Heart left ventricle (tissue), 16 donors: ENCODE measurements at regions of chr16 and their contacts with region 1.

Region 1: DNA sequence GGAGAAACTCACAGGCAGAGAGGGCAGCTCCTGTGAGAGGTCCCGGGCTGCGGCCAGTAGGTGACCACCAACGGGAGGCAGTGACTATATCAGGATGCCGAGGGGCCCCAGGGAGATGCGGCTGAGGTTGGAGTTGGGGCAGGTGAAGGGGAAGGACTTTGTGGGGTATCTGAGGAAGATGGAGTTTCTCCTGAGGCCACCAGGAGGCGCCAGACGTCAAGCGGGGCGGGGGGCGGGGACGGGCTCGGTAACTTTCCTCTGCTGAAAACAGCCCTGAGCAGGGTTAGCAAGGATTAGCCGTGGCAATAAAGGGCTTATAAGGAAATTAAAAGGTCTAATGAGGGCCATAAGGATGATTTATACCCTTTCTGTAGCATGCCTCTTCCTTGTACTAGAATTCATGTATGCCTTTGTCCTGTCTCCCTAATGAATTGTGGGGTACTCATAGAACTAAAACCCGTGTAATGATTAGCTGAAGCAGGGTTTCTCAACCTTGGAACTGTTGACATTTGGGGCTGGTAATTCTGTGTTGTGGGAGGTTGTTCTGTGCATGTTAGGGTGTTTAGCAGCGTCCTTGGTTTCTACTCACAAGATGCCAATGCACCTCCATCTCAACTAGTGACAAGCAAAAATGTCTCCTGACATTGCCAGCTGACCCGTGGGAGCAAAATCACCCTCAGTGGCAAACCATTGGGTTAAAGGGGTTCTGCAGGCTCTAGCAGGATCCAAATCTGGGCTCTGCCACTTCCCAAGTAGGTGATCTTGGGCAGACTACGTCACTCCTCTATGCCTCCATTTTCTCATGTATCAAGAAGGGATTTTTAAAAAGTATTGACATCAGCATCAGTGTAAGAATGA is 74.8 kb upstream of the GRIN2A start:
- DNase-seq: peak in 2 of 5 donors; percentile 25 to 27
- ATAC-seq: peak in 2 of 4 donors; percentile 58 to 76
- H3K4me3 ChIP-seq: no peak overlapping the region
- H3K27ac ChIP-seq: no peak overlapping the region
- H3K4me1 ChIP-seq: peaks cover 0 to 11% (median 0%) of the 10 kb centered on the region in 12 donors
- H3K27me3 ChIP-seq: peaks cover 0 to 15% (median 0%) of the 10 kb centered on the region in 9 donors
- CTCF ChIP-seq: peak; percentile 59 to 84 (median 73)
- POLR2A ChIP-seq: no peak

Region 2: GRCh38 chr16:8828541-8829165 is 1428.4 kb before region 1 on chr16:
- intact Hi-C with region 1: no loop called
- DNase-seq: no peak
- ATAC-seq: no peak
- H3K4me3 ChIP-seq: no peak overlapping the region
- H3K27ac ChIP-seq: no peak overlapping the region
- H3K4me1 ChIP-seq: no peaks in the 10 kb centered on the region
- H3K27me3 ChIP-seq: no peaks in the 10 kb centered on the region
- CTCF ChIP-seq: no peak
- POLR2A ChIP-seq: no peak

Region 3: DNA sequence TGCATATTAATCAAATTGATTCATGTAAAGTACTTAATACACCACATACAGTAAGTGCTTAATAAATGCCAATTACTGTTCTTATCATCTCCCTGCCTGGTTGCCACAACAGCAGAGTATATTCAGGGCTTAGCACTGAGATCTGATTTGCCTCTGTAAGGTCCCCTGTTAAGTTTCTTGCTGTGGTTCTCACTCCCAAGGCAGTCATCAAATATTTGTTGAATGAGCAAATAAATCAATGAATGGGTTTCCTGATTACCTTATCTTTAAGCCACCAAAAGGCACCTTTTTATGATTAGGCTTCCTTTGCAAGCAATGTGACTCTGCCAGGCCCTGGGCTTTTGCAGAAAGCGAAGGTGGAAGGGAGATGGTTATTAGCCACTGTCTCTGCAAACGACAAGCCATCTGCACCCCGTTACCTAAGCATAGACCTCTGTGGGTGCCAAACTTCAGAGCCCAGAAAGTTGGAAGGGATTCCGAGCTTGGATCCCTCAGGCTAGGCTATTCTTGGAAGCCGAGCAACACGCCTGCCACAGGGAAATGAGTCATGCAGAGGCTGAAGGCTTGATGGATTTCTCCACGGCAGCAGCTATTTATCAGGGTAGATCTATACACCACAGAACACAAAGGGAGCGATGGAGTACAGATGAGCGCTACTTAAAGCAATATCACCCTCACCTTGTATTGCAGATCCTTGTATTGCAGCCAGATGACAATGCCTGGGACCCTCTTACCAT is 176.8 kb before region 1 on chr16:
- intact Hi-C with region 1: no loop called
- DNase-seq: peak; percentile 31 to 69 (median 66)
- ATAC-seq: peak; percentile 81 to 95 (median 94)
- H3K4me3 ChIP-seq: no peak overlapping the region
- H3K27ac ChIP-seq: peak overlapping the region in 4 of 12 donors; percentile 29 to 50 (median 36)
- H3K4me1 ChIP-seq: peaks cover 0 to 24% (median 15%) of the 10 kb centered on the region in 12 donors
- H3K27me3 ChIP-seq: peaks cover 0 to 4% (median 0%) of the 10 kb centered on the region in 9 donors
- CTCF ChIP-seq: no peak
- POLR2A ChIP-seq: no peak

Region 4: DNA sequence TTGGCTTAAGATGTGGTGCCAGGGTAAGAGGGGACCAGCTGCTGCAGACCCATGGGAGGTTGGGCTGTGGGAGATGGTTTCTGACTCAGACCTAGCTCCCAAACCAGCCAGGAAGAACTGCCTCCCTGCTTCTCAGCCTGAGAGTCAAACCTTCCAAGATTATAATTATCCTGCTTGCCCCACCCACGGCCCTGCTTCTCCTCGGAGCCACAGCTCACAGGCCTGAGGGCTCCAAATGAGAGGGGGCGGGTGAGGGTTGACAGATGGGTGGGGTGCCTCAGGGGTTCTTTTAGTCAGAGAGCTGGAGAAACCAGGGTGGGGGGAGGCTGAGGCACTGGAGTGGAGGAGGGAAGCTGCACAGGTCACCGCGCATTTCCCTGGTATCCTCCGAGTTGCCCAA is 46.1 kb before region 1 on chr16:
- intact Hi-C with region 1: loop called in 1 of 10 experiments (anchors 5 kb)
- DNase-seq: no peak
- ATAC-seq: no peak
- H3K4me3 ChIP-seq: no peak overlapping the region
- H3K27ac ChIP-seq: no peak overlapping the region
- H3K4me1 ChIP-seq: no peaks in the 10 kb centered on the region
- H3K27me3 ChIP-seq: peaks cover 0 to 5% (median 0%) of the 10 kb centered on the region in 9 donors
- CTCF ChIP-seq: no peak
- POLR2A ChIP-seq: no peak

Region 5: DNA sequence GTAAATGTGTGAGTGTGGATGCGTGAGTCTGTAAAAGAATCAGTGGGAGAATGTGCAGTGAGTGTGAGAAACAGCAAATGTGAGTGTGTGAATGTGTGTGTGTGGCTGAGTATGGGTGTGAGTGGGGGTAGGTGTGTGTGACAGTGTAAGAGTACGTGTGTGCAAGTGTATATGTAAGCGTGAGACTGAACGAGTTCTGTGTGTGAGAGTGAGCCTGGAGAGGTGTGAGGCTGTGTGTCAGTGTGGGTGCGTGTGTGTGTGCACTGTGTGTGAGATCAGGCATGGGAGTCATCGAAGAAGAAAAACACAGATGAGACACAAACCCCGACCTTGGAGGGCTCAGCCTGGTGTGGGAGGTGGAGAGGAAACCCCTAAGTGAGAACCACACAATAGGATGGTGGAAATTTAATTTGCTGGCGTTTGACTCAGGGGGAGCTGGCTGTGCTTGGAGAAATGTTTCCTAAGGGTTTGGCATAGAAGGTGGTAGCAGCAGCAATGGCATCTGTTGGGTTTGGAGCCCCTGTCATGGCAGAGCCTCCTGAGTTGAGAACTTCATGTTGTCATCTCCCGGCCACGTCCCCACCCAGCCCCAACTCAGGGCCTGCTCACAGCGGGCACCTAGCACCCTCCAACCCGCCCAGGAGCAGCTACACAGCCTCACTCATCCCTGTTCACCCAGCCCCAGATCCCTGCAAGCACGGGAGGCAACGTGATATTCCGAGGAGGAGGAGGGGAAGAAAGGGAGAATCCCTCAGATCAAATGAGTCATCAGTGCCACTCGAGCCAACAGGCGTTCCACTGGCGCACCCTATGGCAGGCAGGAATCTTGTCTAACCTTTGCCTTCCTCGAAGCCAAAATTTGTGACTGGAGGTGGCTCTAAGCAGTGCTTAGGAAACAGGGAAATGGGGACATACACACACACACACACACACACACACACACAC is 472.4 kb after region 1 on chr16:
- intact Hi-C with region 1: loop called in 5 of 10 experiments (anchors 5 to 10 kb)
- DNase-seq: no peak
- ATAC-seq: peak in 3 of 4 donors; percentile 20 to 69 (median 64)
- H3K4me3 ChIP-seq: no peak overlapping the region
- H3K27ac ChIP-seq: no peak overlapping the region
- H3K4me1 ChIP-seq: no peaks in the 10 kb centered on the region
- H3K27me3 ChIP-seq: no peaks in the 10 kb centered on the region
- CTCF ChIP-seq: no peak
- POLR2A ChIP-seq: no peak